Aorta (tissue), 5 donors: ENCODE measurements at regions of chr9 and their contacts with region 1.

Region 1: DNA sequence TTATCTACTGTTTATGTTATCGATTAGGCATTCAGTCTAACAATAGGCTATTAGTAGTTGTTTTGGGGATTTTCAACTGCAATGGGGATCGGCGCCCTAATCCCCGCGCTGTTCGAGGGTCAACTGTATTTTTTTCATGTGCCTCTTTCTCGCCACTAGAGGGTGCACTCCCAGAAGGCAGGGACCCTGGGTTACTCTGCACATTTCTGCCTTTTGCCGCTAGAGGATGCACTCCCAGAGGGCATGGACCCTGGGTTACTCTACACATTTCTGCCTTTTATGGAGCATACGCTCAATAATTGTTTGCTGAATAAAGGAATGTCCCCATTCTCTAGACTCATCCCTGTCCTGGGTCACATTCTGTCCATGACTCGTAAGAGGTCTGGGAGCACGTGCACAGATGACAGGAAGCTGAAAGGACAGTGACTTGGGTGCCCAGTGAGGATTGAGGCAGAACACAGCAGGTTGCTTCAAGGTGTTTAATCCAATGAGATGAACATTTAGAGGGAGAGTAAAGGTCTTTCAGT is 27.9 kb upstream of the RECK start:
- DNase-seq: peak; percentile 70 to 76
- ATAC-seq: peak; percentile 87
- H3K4me3 ChIP-seq: no peak overlapping the region
- H3K27ac ChIP-seq: no peak overlapping the region
- H3K4me1 ChIP-seq: peaks cover 0 to 2% of the 10 kb centered on the region in 2 donors
- H3K27me3 ChIP-seq: peaks cover 0 to 2% of the 10 kb centered on the region in 2 donors

Region 2: DNA sequence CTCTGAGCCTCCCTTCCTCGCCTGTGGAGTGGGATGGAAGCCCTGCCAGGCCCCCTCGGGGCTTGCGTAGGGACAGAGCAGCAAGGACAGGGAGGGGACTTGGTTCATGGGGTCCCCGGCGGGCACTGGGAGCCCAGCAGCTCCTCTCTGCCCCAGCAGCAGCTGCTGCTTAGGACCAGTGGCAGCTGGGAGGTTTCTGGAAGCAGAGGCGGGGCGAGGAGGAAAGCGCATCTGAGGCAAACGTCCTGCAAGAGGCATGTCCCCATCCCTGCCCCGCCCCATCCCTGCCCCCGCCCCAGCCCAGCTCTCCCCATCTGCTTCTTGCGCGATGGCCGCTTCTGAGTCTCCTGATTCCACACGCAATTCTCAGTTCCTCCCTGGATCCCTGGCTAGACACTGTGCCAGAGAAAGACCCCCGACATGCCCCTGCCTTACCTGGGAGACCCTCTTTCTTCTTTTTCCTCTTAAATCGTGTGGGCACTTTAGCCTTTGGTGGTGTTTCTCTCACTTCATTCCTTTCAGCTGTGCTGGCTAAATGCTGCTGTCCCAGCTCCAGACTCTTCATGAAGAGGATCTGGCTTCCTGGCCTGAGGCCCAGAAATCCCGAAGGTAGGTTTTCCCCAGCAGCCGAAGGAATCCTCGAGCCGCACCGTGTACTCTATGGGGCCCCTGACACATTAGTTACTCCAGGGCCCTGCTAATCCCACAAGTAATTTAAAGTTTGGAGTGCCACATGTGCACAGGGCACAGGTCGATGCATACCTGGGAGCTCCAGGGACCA is 46.5 kb before region 1 on chr9:
- intact Hi-C with region 1: loop called in 1 of 2 experiments (anchors 5 kb)
- DNase-seq: no peak
- ATAC-seq: no peak
- H3K4me3 ChIP-seq: no peak overlapping the region
- H3K27ac ChIP-seq: no peak overlapping the region
- H3K4me1 ChIP-seq: no peaks in the 10 kb centered on the region
- H3K27me3 ChIP-seq: no peaks in the 10 kb centered on the region